Activated CD8-positive, alpha-beta T cell treated with anti-CD3 and anti-CD28 coated beads, Interleukin-2, amount 10 ng/mL, durations not matched to agents 7 days and 5 days (primary cell): ENCODE measurements at regions of chr14 and their contacts with region 1.

Region 1: DNA sequence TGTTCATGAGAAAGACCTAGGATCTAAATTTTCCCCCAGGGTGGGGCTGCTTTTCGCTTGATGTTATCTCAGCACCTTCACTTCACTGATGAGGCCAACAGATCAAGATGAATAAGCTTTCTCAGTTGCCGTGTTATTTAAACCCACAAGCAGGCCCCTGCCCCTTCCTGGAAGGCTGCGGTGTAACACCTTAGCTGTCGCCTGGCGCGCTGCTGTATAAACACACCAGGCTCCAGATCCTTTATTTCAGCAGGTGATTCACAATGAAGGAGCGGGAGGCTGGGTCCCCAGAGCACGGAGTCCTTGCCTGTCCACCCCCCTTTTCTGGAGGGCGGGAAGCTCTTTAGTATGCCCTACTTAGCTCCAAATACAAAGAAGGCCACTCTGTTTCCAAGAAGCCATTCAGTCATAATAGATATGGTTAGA is 515.4 kb downstream of the FUT8 start:
- DNase-seq: peak; percentile 91
- ATAC-seq: peak; percentile 94
- H3K4me3 Mint-ChIP-seq: peak overlapping the region; percentile 55
- H3K27ac Mint-ChIP-seq: peak overlapping the region; percentile 92
- H3K4me1 Mint-ChIP-seq: peaks cover 79% of the 10 kb centered on the region
- H3K27me3 Mint-ChIP-seq: no peaks in the 10 kb centered on the region

Region 2: DNA sequence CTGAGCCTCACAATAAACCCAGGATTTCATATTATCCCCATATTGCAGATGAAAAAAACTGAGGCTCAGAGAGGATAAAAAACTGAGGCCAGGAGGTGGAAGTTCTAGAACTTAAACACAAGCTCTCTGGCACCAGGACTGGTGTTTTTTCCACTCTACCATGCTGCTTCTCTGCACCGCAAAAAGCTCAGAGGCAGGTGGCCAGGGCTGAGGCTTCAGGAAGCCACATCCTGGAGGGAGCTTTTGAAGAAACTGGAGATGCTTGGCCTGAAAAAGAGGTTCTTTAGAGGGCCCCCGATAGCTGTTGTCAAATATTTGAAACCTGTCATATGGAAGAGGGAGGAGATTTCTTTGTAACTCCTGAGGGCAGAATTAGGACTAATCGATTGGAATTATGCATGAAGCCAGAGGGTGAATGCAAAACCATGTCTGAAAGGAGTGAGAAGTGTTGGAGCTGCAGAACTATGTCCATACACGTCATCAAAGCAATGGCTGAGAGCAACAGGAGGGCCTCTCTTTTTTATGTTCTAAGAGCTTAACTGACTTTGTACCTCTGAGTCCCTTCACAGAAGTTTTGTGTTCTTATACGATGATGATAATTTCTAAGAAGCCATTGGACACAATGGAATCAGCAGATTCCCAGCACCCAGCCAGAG is 66.9 kb before region 1 on chr14:
- CTCF ChIA-PET with region 1: interaction called, 7 read pairs
- POLR2A ChIA-PET with region 1: interaction called, 10 read pairs
- DNase-seq: peak; percentile 84
- ATAC-seq: peak; percentile 89
- H3K4me3 Mint-ChIP-seq: peak overlapping the region; percentile 59
- H3K27ac Mint-ChIP-seq: peak overlapping the region; percentile 88
- H3K4me1 Mint-ChIP-seq: peaks cover 69% of the 10 kb centered on the region
- H3K27me3 Mint-ChIP-seq: no peaks in the 10 kb centered on the region

Region 3: GRCh38 chr14:65879248-65880009 is 48.5 kb before region 1 on chr14:
- CTCF ChIA-PET with region 1: interaction called, 17 read pairs
- POLR2A ChIA-PET with region 1: interaction called, 4 read pairs
- DNase-seq: no peak
- ATAC-seq: peak; percentile 37
- H3K4me3 Mint-ChIP-seq: no peak overlapping the region
- H3K27ac Mint-ChIP-seq: peak overlapping the region; percentile 83
- H3K4me1 Mint-ChIP-seq: peaks cover 9% of the 10 kb centered on the region
- H3K27me3 Mint-ChIP-seq: no peaks in the 10 kb centered on the region

Region 4: DNA sequence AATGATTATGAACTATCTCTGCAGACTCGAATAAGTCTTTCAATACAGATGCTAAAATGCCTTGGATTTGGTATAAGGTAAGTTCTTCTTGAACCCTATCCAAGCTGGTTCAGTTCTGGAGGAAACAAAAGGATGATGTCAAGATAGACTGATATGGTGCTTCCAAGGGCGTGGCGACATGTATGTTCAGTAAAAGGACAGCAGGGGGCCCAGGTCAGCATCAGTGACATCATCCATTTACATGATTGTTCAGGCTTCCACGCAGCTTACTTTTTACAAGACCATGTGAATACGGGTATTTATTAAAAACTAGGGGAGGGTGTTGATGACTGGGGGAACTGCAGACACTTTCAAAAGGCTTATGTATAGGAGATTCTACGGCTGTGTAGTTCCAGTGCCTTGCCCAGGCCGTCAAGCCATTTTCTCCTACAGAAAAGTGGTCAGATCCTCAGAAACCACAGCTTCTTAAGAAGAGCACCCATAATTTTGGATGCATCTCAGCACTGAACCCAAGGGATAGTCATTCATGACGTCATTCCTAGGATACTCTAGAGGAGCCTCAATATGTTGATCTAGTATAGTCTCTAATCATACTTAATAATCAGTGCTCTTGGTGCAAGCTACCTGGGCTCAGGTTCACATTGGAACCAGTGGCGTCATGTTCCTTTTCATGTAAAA is 12.3 kb after region 1 on chr14:
- CTCF ChIA-PET with region 1: interaction called, 12 read pairs
- POLR2A ChIA-PET with region 1: no interaction called
- DNase-seq: peak; percentile 50
- ATAC-seq: peak; percentile 49
- H3K4me3 Mint-ChIP-seq: no peak overlapping the region
- H3K27ac Mint-ChIP-seq: no peak overlapping the region
- H3K4me1 Mint-ChIP-seq: peaks cover 53% of the 10 kb centered on the region
- H3K27me3 Mint-ChIP-seq: no peaks in the 10 kb centered on the region

Region 5: DNA sequence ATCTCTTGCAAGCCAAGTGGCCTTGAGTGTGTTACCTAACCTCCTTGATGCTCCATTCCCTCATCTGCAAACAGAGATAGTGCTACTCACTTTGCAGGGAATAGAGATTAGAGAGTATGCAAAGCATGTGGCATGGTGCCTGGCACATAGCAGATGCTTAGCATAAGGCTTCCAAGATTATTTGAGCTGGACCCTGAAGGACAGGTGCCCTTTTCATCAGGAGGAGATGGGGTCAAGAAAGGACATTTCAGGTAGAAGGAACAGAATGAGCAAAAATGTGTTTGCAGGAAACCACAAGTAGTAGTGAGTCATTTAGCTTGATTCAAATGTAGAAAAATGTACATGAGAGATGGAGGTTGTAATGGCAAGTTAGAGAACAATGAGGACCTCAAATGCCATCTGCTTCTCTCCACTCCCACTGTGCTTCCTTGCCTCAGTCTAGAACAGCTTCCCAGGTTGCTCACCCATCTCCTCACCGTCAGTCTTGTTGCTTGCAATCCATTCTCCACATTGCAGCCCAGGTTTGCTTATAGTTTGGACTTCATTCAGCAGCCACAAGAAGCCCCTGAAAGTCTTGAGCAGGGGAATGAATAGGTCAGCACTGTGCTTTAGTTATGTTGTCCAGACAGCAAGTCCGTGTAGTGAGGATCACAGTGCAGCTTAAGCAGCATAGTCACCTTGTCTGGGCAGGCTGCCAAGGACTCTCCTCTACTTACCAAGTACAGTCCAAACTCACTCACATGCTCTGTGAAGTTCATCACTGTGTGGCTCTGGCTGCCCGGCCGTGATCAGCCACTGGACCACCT is 22.0 kb after region 1 on chr14:
- CTCF ChIA-PET with region 1: interaction called, 12 read pairs
- POLR2A ChIA-PET with region 1: interaction called, 15 read pairs
- DNase-seq: peak; percentile 31
- ATAC-seq: peak; percentile 73
- H3K4me3 Mint-ChIP-seq: no peak overlapping the region
- H3K27ac Mint-ChIP-seq: peak overlapping the region; percentile 79
- H3K4me1 Mint-ChIP-seq: peaks cover 37% of the 10 kb centered on the region
- H3K27me3 Mint-ChIP-seq: peaks cover 2% of the 10 kb centered on the region